ENCODE measurements at regions of chr4 and their contacts with region 1.

Region 1: GRCh38 chr4:76301068-76301774 is 5.3 kb upstream of the STBD1 start:
- DNase-seq: peak; percentile 83
- ATAC-seq: peak; percentile 64
- H3K4me3 ChIP-seq: 0 out of 4 replicates have a peak overlapping the region, but pooled peaks of 1 of the 2 experiments have one; percentile 0
- H3K27ac ChIP-seq: peak overlapping the region; percentile 62; the same call in 1 of the 2 replicates
- H3K4me1 ChIP-seq: peaks cover 19 to 37% of the 10 kb centered on the region in 2 experiments
- H3K27me3 ChIP-seq: no peaks in the 10 kb centered on the region
- CTCF ChIP-seq: no peak
- POLR2A ChIP-seq: no peak
- RAD21 ChIP-seq: no peak

Region 2: DNA sequence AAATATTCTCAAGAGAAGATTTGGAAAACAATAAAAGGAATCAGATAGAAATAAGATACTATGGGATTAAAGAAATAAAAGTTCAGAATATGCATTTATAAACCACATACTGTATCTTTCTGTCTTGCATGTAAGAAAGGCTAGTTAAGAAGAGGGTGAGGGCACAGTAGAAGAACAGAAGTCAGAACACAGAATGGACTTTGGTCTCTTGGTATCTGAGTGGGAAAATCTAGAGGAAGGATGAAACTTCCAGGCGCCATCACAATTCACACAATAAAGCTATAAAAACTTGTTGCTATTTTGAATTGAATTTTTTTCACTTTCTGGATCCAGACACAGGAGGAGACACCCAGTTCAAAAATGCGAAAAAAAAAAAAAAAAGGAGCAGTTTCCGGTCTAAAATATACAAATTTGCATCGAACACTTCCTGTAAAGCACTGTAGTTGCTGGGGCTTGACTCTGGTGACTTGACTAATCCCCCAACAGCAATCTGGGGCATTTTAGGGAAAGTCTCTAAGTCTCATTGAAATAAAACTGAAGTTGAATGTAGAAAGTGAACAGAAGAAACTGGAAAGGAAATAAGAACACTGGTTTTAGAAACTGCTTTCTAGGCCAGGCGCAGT is 352.3 kb before region 1 on chr4:
- CTCF ChIA-PET with region 1: no interaction called
- POLR2A ChIA-PET with region 1: no interaction called
- RAD21 ChIA-PET with region 1: no interaction called
- intact Hi-C with region 1: no loop called
- DNase-seq: no peak
- ATAC-seq: no peak
- H3K4me3 ChIP-seq: no peak overlapping the region
- H3K27ac ChIP-seq: no peak overlapping the region
- H3K4me1 ChIP-seq: no peaks in the 10 kb centered on the region
- H3K27me3 ChIP-seq: no peaks in the 10 kb centered on the region
- CTCF ChIP-seq: no peak
- POLR2A ChIP-seq: no peak
- RAD21 ChIP-seq: no peak

Region 3: GRCh38 chr4:76235915-76236314 is 65.3 kb before region 1 on chr4:
- CTCF ChIA-PET with region 1: no interaction called
- POLR2A ChIA-PET with region 1: no interaction called
- RAD21 ChIA-PET with region 1: no interaction called
- intact Hi-C with region 1: loop called (anchors 2 kb)
- DNase-seq: no peak
- ATAC-seq: no peak
- H3K4me3 ChIP-seq: peak overlapping the region in 1 of 2 experiments; percentile 36; a peak in 2 of 4 replicates
- H3K27ac ChIP-seq: peak overlapping the region; percentile 54
- H3K4me1 ChIP-seq: peaks cover 17 to 26% of the 10 kb centered on the region in 2 experiments
- H3K27me3 ChIP-seq: no peaks in the 10 kb centered on the region
- CTCF ChIP-seq: no peak
- POLR2A ChIP-seq: no peak
- RAD21 ChIP-seq: peak; percentile 21

Measured in HCT116 (cell line).